ENCODE measurements at regions of chr3 and their contacts with region 1.

Region 1: DNA sequence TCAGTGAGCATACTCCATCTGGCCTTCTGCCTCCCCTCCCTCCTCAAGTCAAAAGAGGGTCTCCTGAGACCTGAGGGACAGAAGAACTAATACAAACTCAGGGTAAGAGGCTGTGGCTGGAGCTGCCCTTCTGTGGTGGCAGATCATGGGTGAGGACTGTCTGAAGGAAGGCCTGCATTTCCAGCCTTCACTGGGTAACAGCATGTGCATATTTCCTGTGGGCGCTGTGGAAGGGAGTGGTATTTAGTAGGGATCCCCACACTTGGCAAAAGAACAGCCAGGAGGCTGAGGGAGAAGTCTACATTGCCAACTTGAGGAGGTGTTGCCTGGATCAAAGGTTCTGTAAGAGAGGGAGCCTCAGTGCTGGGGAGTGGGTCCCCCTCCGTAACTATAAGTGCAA is 10.1 kb upstream of the ESYT3 start:
- DNase-seq: no peak
- H3K4me3 ChIP-seq: no peak overlapping the region
- H3K27ac ChIP-seq: no peak overlapping the region
- H3K27me3 ChIP-seq: no peaks in the 10 kb centered on the region
- CTCF ChIP-seq: no peak

Region 2: GRCh38 chr3:138060792-138061191 is 363.5 kb before region 1 on chr3:
- intact Hi-C with region 1: loop called in 1 of 2 experiments (anchors 5 kb)
- DNase-seq: no peak
- H3K4me3 ChIP-seq: no peak overlapping the region
- H3K27ac ChIP-seq: no peak overlapping the region
- H3K27me3 ChIP-seq: no peaks in the 10 kb centered on the region
- CTCF ChIP-seq: no peak

Region 3: GRCh38 chr3:138157743-138158142 is 266.6 kb before region 1 on chr3:
- intact Hi-C with region 1: no loop called
- DNase-seq: no peak
- H3K4me3 ChIP-seq: no peak overlapping the region
- H3K27ac ChIP-seq: no peak overlapping the region
- H3K27me3 ChIP-seq: no peaks in the 10 kb centered on the region
- CTCF ChIP-seq: no peak

Region 4: GRCh38 chr3:138717348-138717747 is 293.0 kb after region 1 on chr3:
- intact Hi-C with region 1: no loop called
- DNase-seq: no peak
- H3K4me3 ChIP-seq: no peak overlapping the region
- H3K27ac ChIP-seq: no peak overlapping the region
- H3K27me3 ChIP-seq: no peaks in the 10 kb centered on the region
- CTCF ChIP-seq: no peak

Region 5: DNA sequence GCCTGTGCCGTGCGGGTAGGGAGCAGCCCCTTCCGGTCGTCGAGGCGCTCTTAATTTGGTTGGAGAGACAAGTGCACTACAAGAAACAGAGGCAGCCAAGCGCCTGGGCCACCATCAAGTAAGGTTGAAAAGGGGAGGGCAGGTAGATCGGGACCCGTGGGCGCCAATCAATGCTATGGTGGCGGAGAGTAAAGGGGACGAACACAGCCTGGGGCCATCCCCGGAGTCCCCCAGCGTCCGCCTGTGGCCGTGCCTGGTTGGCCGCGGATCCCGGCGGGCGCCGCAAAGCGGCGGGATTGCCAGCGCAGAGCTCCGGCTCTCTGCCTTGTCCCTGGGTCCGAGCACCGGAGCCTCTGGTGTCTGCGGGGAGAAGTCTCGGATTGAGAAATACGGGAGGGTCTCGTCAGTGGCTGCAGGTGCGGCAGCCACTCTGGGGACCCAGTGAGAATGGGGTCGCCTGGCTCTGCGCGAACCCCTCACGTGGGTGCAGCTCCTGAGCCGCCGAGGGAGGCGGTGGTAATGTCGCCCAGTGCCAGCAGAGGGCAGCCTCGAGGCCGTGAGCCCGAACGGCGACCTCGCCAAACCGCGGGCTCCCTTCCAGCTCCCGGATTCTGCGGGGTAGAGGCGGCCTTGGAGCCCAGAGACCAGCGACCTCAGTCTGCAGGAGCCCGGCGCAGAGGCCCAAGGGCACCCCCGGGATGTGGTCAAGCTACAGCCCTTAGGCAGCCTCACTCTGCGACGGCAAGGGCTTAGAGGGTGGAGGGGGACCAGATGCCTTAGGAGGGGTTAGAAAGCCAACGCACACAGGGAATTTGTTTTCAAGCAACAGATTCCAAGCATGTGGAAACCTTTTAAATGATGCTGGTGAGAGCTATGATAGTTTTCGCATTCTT is 511.8 kb after region 1 on chr3:
- intact Hi-C with region 1: no loop called
- DNase-seq: peak in 8 of 10 donors; percentile 39 to 77 (median 56)
- H3K4me3 ChIP-seq: peak overlapping the region in 58 of 59 donors; percentile 25 to 73 (median 51)
- H3K27ac ChIP-seq: peak overlapping the region in 1 of 59 donors; percentile 7
- H3K27me3 ChIP-seq: peaks cover 22 to 58% (median 52%) of the 10 kb centered on the region in 45 donors
- CTCF ChIP-seq: peak; percentile 65 to 96 (median 90)